Naive thymus-derived CD8-positive, alpha-beta T cell (primary cell): ENCODE measurements at regions of chr9 and their contacts with region 1.

Region 1: DNA sequence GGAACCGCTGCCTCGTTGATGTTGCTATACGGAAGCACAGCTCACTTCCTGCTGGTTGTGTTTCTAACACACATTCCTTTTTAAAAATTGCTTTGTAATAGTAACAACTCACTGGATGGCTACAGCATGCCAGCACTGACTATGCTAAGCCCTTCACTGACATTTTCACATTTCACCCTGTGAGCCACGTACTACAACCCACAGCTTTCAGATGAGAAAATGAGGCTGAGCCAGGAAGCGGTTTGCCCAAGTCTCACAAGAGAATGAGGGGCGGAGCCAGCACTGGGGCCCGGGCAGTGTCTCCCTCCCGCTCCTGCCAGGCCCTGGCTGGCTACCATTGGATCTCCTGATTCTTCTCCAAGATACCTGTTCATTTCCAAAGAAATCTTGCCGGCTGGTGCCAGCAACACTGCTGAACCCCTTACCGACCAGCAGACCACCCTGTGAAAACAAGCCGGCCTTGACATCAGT is 38.3 kb downstream of the FAM78A start:
- DNase-seq: peak; percentile 59 to 92 (median 84)
- ATAC-seq: peak; percentile 97 to 98
- H3K4me3 Mint-ChIP-seq: peak overlapping the region; percentile 75 to 93 (median 86)
- H3K27ac Mint-ChIP-seq: peak overlapping the region; percentile 93 to 98 (median 98)
- H3K4me1 Mint-ChIP-seq: peaks cover 13 to 64% (median 42%) of the 10 kb centered on the region in 4 donors
- H3K27me3 Mint-ChIP-seq: no peaks in the 10 kb centered on the region

Region 2: GRCh38 chr9:131098391-131099101 is 139.4 kb before region 1 on chr9:
- POLR2A ChIA-PET with region 1: no interaction called
- DNase-seq: no peak
- ATAC-seq: no peak
- H3K4me3 Mint-ChIP-seq: peak overlapping the region in 2 of 10 donors; percentile 14 to 74
- H3K27ac Mint-ChIP-seq: no peak overlapping the region
- H3K4me1 Mint-ChIP-seq: peaks cover 5 to 10% (median 7%) of the 10 kb centered on the region in 4 donors
- H3K27me3 Mint-ChIP-seq: peaks cover 19 to 45% (median 30%) of the 10 kb centered on the region in 5 donors

Region 3: GRCh38 chr9:131253891-131254491 is 16.0 kb after region 1 on chr9:
- POLR2A ChIA-PET with region 1: interaction called, 84 read pairs
- DNase-seq: no peak
- ATAC-seq: no peak
- H3K4me3 Mint-ChIP-seq: peak overlapping the region in 9 of 10 donors; percentile 27 to 84 (median 52)
- H3K27ac Mint-ChIP-seq: peak overlapping the region; percentile 11 to 99 (median 97)
- H3K4me1 Mint-ChIP-seq: peaks cover 18 to 76% (median 58%) of the 10 kb centered on the region in 4 donors
- H3K27me3 Mint-ChIP-seq: peaks cover 0 to 2% (median 0%) of the 10 kb centered on the region in 5 donors

Region 4: DNA sequence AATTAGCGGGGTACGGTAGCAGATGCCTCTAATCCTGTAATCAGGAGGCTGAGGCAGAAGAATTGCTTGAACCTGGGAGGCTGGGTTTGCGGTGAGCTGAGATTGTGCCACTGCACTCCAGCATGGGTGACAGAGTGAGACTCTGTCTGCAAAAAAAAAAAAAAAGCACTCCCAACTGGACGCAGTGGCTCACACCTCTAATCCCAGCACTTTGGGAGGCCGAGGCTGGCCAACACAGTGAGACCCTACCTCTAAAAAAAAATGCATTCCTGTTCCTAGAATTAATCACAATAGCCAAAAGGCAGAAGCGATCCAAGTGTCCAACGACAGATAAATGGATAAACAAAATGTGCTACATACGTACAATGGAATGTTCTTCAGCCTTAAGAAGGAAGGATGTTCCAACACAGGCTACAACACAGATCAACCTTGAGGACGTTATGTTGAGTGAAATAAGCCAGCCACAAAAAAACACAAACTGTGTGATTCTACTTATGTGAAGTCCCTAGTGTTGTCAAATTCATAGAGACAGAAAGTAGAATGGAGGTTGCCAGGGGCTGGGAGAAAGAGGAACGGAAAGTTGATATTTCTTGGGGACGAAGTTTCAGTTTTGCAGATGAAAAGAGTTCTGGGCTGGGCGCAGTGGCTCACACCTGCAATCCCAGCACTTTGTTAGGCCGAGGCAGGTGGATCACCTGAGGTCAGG is 24.5 kb after region 1 on chr9:
- POLR2A ChIA-PET with region 1: interaction called, 136 read pairs
- DNase-seq: no peak
- ATAC-seq: no peak
- H3K4me3 Mint-ChIP-seq: peak overlapping the region; percentile 31 to 93 (median 71)
- H3K27ac Mint-ChIP-seq: peak overlapping the region; percentile 82 to 100 (median 92)
- H3K4me1 Mint-ChIP-seq: peaks cover 32 to 87% (median 81%) of the 10 kb centered on the region in 4 donors
- H3K27me3 Mint-ChIP-seq: no peaks in the 10 kb centered on the region

Region 5: DNA sequence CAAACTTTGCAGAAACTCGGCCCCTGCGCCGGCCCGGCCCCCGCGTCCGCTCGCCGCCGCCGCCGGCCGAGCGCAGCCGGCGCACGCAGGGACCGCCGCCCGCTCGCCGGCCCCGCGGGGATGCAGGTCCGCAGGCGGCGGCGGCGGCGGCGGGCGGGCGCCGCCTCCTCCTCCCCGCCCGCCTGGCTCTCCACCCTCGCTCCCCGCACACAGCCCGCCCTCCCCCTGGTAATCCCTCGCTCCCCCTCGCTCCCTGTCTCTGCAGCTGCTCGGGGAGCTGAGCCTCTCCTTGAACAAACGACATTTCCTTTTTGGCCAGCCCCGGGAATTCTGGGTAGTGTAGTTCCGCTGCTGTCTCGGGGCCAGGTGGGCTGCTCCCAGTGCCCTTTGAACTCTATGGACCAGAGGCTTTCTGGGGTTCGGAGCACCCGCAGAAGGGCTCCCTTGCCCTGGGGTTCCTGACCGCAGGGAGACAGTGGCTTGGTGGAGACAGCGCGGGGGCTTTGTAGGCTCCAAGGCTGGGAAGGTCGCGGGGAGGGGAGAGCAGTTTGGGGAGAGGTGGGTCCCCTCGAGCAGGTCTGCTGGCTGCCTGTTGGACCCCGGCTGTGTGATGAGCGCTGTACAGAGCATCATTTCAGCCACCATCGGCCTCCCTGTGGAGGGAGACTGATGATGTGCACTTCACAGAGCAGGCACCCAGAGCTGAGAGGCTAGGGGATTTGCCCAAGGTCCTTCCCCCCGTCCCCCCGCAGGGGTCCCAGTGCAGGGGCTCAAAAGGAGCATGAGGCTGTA is 40.1 kb after region 1 on chr9:
- POLR2A ChIA-PET with region 1: interaction called, 136 read pairs
- DNase-seq: peak in 9 of 10 donors; percentile 50 to 85 (median 63)
- ATAC-seq: peak; percentile 47 to 52
- H3K4me3 Mint-ChIP-seq: peak overlapping the region; percentile 85 to 95 (median 90)
- H3K27ac Mint-ChIP-seq: peak overlapping the region; percentile 81 to 96 (median 94)
- H3K4me1 Mint-ChIP-seq: peaks cover 19 to 39% (median 27%) of the 10 kb centered on the region in 4 donors
- H3K27me3 Mint-ChIP-seq: peaks cover 0 to 7% (median 1%) of the 10 kb centered on the region in 5 donors